Pancreas (tissue), 10 donors: ENCODE measurements at regions of chr10 and their contacts with region 1.

Region 1: DNA sequence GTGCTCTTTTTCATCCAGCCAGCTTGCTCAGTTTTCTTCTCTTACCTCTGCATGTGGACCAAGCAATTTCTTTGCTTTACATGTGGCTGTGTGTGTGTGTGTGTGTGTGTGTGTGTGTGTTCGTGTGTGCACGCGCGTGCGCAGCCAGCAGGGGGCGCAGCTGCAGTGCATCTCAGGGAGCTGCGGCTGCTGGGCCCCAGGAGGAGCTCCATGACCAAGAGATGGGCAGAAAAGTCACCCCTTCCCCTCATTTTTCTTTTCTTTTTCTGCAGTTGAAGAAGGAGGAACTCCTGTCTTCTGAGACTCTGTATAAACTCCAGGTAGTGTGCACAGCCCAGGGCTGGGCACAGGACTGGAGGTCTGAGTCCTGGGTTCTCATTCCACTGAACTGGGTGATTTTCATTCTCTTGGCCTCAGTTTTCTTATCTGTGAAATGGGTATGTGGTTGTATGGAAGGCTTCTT is 41.8 kb downstream of the BLNK start:
- DNase-seq: peak; percentile 71 to 96 (median 85)
- ATAC-seq: peak; percentile 57 to 97 (median 89)
- H3K4me3 ChIP-seq: no peak overlapping the region
- H3K27ac ChIP-seq: no peak overlapping the region
- H3K4me1 ChIP-seq: no peaks in the 10 kb centered on the region
- H3K27me3 ChIP-seq: no peaks in the 10 kb centered on the region
- CTCF ChIP-seq: peak; percentile 36 to 66 (median 56)

Region 2: GRCh38 chr10:95363303-95363912 is 866.2 kb before region 1 on chr10:
- intact Hi-C with region 1: no loop called
- DNase-seq: peak in 3 of 6 donors; percentile 28 to 57 (median 29)
- ATAC-seq: peak; percentile 77 to 91 (median 86)
- H3K4me3 ChIP-seq: no peak overlapping the region
- H3K27ac ChIP-seq: no peak overlapping the region
- H3K4me1 ChIP-seq: no peaks in the 10 kb centered on the region
- H3K27me3 ChIP-seq: no peaks in the 10 kb centered on the region
- CTCF ChIP-seq: peak; percentile 51 to 85 (median 78)

Region 3: DNA sequence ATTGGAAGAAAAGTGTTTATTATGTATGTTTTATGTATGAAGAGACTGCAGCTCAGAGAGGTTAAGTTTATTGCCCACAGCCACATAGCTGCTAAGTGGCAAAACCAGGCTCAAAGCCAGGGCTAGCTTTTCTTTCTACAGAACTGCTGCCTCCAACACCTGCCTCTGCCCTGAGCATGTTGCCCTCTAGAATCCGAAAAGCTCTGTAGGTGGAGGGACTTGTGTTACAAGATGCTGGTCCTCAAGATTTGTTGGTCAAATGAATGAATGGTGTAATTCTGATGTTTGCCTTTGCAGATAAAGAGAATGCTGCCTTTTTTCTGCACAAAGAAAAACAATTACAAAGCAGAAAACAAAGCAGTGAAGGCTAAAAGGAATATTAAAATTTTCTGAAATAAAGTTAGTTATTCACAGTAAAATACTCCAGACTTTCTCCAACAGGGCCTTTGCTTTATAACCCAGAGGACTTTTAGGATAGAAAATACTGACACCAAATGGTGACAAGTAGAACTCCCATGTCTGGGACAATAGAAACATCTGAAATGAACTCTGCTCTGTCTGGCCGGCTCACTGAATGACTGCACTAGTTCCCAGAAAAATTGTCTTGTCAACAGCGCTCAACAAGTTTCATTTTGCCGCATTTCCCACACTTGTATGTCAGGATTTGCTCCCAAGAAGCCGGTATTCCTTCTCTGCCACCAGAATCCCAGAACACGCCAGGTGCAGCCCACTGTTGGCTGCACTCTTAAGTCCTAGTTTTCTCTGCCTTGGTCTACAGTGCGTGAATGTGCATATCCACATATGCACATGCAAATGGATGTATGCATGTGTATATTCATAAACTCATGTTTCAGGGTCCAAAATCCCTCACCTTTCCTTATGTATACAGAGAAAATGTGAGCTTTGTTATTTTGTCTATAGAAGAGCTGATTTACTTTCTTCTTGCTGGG is 63.6 kb after region 1 on chr10:
- intact Hi-C with region 1: loop called in 2 of 3 experiments (anchors 2 to 5 kb)
- DNase-seq: peak in 1 of 6 donors; percentile 44
- ATAC-seq: peak; percentile 88 to 99 (median 96)
- H3K4me3 ChIP-seq: no peak overlapping the region
- H3K27ac ChIP-seq: no peak overlapping the region
- H3K4me1 ChIP-seq: peaks cover 5 to 7% (median 5%) of the 10 kb centered on the region in 3 donors
- H3K27me3 ChIP-seq: no peaks in the 10 kb centered on the region
- CTCF ChIP-seq: peak in 3 of 4 donors; percentile 43 to 60 (median 46)